ENCODE measurements at regions of chr6 and their contacts with region 1.

Region 1: DNA sequence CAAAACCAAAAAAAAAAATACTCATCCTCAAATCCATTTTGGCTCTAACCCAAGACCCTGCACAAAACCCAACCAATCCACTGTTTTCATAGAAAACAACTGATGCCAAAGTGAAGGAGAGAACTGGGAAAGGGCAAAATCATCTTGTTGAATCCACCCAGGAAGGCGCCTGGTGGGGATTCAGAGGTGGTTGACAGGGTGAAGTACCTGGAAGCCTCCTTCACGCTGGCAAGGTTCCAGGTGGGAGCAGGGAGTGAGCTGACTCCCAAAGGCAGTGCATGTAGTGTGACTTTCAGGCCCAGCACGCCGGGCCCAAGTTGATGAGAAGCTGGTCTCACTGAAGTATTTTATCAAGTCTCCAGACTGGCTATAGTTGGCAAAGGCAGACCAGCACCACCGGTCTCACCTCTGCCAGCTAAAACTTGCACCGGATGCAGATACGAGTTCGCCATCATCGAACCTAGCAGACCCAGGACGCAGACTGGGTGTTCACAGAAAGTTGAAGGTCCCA is 16.5 kb downstream of the PPP1R10 start:
- DNase-seq: no peak
- H3K4me3 Mint-ChIP-seq: no peak overlapping the region
- H3K27ac Mint-ChIP-seq: peak overlapping the region; percentile 33
- H3K4me1 Mint-ChIP-seq: peaks cover 23% of the 10 kb centered on the region
- H3K27me3 Mint-ChIP-seq: no peaks in the 10 kb centered on the region

Region 2: DNA sequence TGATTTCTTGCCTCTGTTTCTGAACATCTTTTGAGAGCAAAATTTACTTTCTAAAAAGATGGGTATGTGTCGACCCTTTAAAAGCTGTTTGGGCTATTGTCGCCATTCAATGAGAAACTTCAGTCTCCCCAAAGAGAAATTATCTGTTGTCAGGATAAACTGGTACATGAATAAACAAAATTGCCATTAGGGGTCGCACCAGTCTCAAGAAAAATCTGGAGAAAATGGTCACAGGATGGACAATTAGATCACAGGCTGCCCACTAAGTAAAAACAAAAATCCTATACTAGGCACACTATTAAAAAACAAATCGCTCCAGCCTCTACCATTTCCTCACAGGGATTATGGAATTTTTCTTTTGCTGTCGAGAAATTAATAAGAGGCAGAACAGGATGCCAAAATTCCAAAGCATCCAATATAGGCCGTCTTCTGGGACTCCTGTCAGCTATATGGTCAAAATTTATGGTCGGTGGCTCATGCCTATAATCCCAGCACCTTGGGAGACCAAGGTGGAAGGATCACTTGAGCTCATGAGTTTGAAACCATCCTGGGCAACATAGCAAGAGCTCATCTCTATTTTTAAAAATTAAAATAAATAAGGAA is 116.7 kb before region 1 on chr6:
- CTCF ChIA-PET with region 1: interaction called, 44 read pairs
- DNase-seq: no peak
- H3K4me3 Mint-ChIP-seq: no peak overlapping the region
- H3K27ac Mint-ChIP-seq: no peak overlapping the region
- H3K4me1 Mint-ChIP-seq: peaks cover 51% of the 10 kb centered on the region
- H3K27me3 Mint-ChIP-seq: peaks cover 60% of the 10 kb centered on the region

Region 3: GRCh38 chr6:30583921-30584320 is 16.6 kb before region 1 on chr6:
- CTCF ChIA-PET with region 1: interaction called, 34 read pairs
- DNase-seq: no peak
- H3K4me3 Mint-ChIP-seq: no peak overlapping the region
- H3K27ac Mint-ChIP-seq: no peak overlapping the region
- H3K4me1 Mint-ChIP-seq: no peaks in the 10 kb centered on the region
- H3K27me3 Mint-ChIP-seq: no peaks in the 10 kb centered on the region

Region 4: DNA sequence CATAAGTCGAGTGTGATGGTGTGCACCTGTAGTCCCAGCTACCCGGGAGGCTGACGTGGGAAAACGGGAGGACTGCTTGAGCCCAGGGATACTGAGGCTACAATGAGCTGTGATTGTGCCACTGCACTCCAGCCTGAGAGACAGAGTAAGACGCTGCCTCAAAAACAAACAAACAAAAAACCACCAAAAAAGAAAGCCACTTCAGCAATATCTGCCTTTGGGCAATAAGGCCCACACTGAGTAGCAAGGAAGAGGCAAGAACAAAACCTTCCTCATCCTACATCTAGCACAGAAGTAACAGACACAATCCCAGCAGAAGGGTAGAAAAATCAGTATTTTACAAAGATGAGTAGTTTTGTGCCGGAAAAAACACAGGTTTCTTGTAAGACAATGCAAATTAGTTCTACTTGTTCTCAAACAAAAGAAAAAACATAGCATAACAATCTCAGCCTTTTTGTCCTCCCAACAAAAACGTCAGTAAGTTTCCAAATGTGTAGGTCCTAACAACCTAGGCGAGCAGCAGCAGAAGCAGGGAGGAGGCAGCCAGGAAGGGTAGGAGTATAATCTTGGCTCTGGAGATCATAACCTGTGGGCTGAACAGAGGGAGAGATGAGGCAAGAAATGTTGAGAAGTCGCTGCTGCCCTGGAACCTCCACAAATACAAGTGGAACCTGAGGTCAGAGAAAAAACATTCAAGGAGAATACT is 10.8 kb after region 1 on chr6:
- CTCF ChIA-PET with region 1: interaction called, 21 read pairs
- DNase-seq: no peak
- H3K4me3 Mint-ChIP-seq: no peak overlapping the region
- H3K27ac Mint-ChIP-seq: peak overlapping the region; percentile 49
- H3K4me1 Mint-ChIP-seq: peaks cover 69% of the 10 kb centered on the region
- H3K27me3 Mint-ChIP-seq: no peaks in the 10 kb centered on the region

Region 5: DNA sequence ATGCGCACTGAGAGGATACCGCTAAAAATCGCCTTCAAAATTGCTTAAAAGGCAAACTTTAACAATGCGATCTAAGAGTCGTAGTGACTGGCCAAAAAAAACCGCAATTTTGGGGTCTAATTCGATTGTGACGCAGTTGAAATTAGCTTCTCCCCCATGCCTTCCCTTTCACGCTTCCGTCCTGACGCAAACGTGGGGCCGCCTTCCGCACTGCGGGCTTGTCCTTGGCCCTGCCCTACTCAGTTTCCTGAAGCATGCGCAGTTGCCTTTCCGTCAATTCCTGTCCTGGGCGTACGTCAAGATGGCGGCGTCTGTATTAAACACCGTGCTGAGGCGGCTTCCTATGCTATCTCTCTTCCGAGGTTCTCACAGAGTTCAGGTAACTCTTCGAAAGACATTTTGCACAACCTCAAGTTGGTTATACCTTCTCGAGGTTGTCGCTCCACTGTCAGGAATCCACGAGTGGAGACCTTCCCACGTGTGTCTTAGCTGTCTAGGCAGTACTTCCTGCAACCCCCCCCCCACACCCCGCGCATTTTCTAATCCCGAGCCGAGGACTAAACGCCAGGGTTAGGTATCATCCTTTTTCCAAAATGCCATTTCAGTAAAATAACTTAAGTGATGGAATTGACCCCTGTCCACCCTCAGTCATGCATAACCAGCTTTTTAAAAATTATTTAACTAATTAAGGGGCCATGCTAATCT is 17.2 kb after region 1 on chr6 and contains the start of gene MRPS18B:
- CTCF ChIA-PET with region 1: interaction called, 21 read pairs
- DNase-seq: peak; percentile 99
- H3K4me3 Mint-ChIP-seq: peak within 1 kb of the TSS; percentile 93
- H3K27ac Mint-ChIP-seq: peak within 1 kb of the TSS; percentile 99
- H3K4me1 Mint-ChIP-seq: peaks cover 40% of the 10 kb centered on the region
- H3K27me3 Mint-ChIP-seq: peaks cover 5% of the 10 kb centered on the region

Region 6: GRCh38 chr6:30664994-30665767 is 64.7 kb after region 1 on chr6:
- CTCF ChIA-PET with region 1: no interaction called
- DNase-seq: no peak
- H3K4me3 Mint-ChIP-seq: no peak overlapping the region
- H3K27ac Mint-ChIP-seq: no peak overlapping the region
- H3K4me1 Mint-ChIP-seq: peaks cover 12% of the 10 kb centered on the region
- H3K27me3 Mint-ChIP-seq: no peaks in the 10 kb centered on the region